AG04450 (cell line): ENCODE measurements at regions of chr17 and their contacts with region 1.

Region 1: DNA sequence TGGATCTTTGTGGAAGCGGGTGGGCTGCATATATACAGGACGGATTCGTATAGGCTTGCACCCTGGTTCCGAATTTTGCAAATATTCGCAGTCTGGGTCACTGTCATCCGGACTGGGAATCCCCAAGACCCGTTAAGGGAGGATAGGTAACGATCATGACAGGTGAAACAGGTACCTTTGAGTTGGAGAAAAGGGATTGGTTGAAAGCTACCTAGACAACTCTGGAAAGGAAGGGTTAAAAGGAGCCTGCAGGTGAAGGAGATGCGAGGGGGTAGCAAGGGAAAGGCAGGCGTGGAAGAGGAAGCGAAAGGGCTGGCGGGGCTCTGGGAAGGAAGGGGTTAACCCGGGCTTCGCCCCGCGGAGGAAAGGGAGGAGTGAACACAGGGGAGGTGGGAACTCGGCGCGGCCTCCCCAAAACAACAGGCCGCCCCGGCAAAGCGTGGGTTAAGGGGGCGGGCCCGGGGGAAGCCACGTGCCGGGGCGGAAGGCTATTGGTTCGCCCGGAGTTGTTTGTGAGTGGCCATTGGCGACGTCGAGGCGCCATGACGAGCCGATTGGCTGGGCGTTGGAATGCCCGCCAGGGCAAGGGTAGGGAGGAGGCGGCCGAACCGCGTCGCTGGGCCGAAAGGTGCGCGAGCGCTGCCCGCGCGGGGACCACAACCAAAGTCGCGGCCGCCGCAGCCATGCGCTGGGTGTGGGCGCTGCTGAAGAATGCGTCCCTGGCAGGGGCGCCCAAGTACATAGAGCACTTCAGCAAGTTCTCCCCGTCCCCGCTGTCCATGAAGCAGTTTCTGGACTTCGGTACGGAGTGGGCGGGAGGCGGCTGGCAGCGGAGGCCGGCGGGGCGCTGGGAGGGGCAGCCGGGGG is at the start of gene PDK2:
- DNase-seq: peak; percentile 87
- H3K4me3 ChIP-seq: peak within 1 kb of the TSS; percentile 83
- H3K27ac ChIP-seq: peak within 1 kb of the TSS; percentile 70
- H3K27me3 ChIP-seq: no peaks in the 10 kb centered on the region
- CTCF ChIP-seq: no peak
- polyA plus RNA-seq, gene PDK2: 62.4 and 81.7 TPM in 2 replicates

Region 2: DNA sequence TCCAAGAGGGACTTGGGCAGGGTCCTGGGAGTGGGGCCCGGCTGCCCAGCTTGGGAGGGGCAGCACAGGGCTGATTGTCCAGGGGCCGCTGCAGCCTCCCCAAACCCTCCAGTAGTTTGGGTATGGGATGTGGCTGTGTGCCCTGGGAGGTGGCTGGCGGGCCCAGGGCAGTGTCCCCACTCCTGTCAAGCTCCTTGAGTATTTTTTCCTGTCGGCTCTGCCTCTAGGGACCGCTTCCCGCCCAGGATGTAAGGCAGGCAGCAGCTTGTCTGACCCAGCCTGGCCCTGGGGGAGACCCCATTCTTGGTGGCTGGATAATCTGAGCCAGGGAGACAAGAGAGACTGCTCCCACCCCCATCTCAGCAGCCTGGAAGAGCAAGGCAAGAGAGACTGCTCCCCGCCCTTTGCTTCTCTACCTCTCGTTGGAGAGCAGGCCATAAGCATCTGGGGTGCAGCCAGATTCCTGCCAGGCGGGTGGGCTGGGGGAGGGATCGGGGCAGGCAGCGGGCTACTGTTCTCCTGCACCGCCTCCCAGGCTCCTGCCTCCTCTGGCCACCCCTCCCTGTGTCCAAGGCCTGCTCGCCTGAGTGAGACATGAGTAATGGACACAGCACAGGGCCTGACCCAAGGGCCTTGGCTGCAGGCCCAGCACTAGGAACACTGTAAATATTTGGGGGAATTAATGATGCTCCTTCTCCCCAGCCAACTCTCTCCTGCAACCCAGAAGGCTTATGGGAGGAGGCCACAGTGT is 57.5 kb before region 1 on chr17:
- CTCF ChIA-PET with region 1: interaction called, 23 read pairs
- POLR2A ChIA-PET with region 1: no interaction called
- DNase-seq: no peak
- H3K4me3 ChIP-seq: no peak overlapping the region
- H3K27ac ChIP-seq: no peak overlapping the region
- H3K27me3 ChIP-seq: no peaks in the 10 kb centered on the region
- CTCF ChIP-seq: no peak

Region 3: DNA sequence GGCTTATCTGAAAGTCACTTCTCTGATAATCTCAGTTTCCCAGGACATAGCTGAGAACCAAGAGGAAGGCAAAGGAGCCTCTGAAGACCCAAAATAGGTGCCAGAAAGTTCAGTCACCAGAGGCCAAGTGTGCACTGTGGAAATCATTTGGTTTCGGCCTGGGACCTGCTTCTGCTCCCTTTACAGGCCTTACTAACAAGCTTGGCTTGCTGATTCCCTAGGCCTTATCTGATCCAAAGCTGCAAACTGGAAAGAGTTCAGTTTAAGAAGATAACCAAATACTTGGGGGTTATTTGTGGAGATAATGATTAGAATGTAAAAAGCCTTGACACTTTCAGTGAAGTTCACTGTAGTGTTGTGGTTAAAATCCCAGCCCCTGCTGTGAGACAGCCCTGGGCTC is 22.1 kb before region 1 on chr17:
- CTCF ChIA-PET with region 1: interaction called, 40 read pairs
- POLR2A ChIA-PET with region 1: no interaction called
- DNase-seq: no peak
- H3K4me3 ChIP-seq: no peak overlapping the region
- H3K27ac ChIP-seq: no peak overlapping the region
- H3K27me3 ChIP-seq: no peaks in the 10 kb centered on the region
- CTCF ChIP-seq: no peak

Region 4: GRCh38 chr17:50114849-50115357 is 19.9 kb after region 1 on chr17:
- CTCF ChIA-PET with region 1: interaction called, 16 read pairs
- POLR2A ChIA-PET with region 1: interaction called, 11 read pairs
- DNase-seq: no peak
- H3K4me3 ChIP-seq: no peak overlapping the region
- H3K27ac ChIP-seq: no peak overlapping the region
- H3K27me3 ChIP-seq: peaks cover 3% of the 10 kb centered on the region
- CTCF ChIP-seq: peak; percentile 76

Region 5: GRCh38 chr17:50161023-50161910 is 66.3 kb after region 1 on chr17:
- CTCF ChIA-PET with region 1: interaction called, 34 read pairs
- POLR2A ChIA-PET with region 1: no interaction called
- DNase-seq: peak; percentile 83
- H3K4me3 ChIP-seq: peak overlapping the region; percentile 73
- H3K27ac ChIP-seq: peak overlapping the region; percentile 57
- H3K27me3 ChIP-seq: no peaks in the 10 kb centered on the region
- CTCF ChIP-seq: peak; percentile 84